Activated naive CD4-positive, alpha-beta T cell treated with anti-CD3 and anti-CD28 coated beads for 36 hours (primary cell): ENCODE measurements at regions of chr10 and their contacts with region 1.

Region 1: GRCh38 chr10:73358331-73359279 is at the start of gene CFAP70:
- DNase-seq: peak; percentile 96
- H3K4me3 Mint-ChIP-seq: peak within 1 kb of the TSS; percentile 96
- H3K27ac Mint-ChIP-seq: peak within 1 kb of the TSS; percentile 74
- H3K4me1 Mint-ChIP-seq: peaks cover 10% of the 10 kb centered on the region
- H3K27me3 Mint-ChIP-seq: no peaks in the 10 kb centered on the region
- total RNA-seq, gene CFAP70: 0.20 to 0.31 TPM

Region 2: DNA sequence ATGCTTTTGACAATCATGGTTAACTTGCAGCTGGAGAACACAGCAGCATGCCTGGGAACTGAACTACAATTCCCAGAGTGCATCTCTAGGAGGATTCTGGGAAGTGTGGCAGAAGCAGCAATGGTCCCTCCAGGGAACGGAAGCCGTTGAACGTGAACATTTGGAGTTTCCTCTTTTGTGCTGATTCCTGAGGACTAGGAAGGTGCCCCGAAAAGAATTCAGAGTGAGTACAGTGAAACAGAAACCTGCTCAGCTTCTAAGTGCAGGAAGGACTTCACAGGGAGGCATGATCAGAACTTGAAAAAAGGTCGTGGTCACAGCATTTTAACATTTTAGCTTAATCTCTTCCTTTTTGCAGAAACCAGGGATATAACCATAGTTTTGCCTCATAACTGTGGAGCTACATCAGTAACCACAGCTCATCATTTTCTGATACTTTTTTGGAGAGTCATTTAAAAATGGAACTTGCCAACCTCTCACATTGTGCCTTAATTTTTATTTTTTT is 248.2 kb before region 1 on chr10 and contains the start of gene NUDT13:
- CTCF ChIA-PET with region 1: no interaction called
- intact Hi-C with region 1: no loop called
- DNase-seq: peak; percentile 65
- H3K4me3 Mint-ChIP-seq: peak within 1 kb of the TSS; percentile 84
- H3K27ac Mint-ChIP-seq: peak within 1 kb of the TSS; percentile 88
- H3K4me1 Mint-ChIP-seq: peaks cover 15% of the 10 kb centered on the region
- H3K27me3 Mint-ChIP-seq: no peaks in the 10 kb centered on the region
- total RNA-seq, gene NUDT13: 0.72 to 0.83 TPM

Region 3: DNA sequence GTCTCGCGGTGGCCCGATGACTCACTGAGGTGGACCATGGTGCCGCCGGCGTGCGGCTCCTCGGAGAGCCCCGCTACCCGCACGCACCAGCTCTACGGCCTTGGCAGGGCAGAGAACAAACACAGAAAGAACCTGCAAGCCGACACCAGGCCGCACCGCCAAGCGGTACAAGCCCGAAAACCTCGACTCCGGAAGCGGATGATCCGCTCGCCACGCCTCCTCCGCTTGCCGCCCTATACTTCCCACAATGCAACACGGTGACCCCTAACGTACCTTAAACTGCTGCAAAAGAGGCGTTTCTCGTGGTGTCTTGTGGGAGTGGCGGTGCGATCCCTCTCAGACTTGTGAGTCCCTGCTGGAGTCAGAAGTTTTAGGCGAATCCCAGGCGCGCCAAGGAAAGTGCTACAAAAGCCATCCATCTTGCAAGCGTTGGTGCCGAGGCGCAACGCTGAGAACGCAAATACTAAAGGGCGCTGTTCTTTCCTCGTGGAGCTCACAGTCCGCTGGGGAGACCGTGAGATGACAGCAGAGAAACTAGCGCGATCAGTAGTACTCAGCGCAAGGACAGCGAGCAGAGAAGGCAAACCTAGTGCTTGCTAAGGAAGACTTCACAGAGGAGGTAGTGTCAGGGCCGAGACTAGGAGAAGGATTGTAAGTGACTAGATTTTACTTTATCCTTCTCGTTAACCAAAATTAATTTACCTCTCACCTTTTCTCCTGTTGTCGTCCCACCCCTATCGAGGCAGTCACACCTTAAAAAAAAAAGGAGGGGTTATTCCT is 106.0 kb before region 1 on chr10 and contains the start of gene MRPS16:
- CTCF ChIA-PET with region 1: no interaction called
- intact Hi-C with region 1: loop called (anchors 1 kb)
- DNase-seq: peak; percentile 97
- H3K4me3 Mint-ChIP-seq: peak within 1 kb of the TSS; percentile 98
- H3K27ac Mint-ChIP-seq: peak within 1 kb of the TSS; percentile 94
- H3K4me1 Mint-ChIP-seq: peaks cover 38% of the 10 kb centered on the region
- H3K27me3 Mint-ChIP-seq: no peaks in the 10 kb centered on the region
- total RNA-seq, gene MRPS16: 140 to 145 TPM